ENCODE measurements at regions of chr11 and their contacts with region 1.

Region 1: GRCh38 chr11:117946842-117947526 is 17.8 kb upstream of the TMPRSS13 start:
- DNase-seq: peak; percentile 79
- CTCF ChIP-seq: peak; percentile 93

Region 2: GRCh38 chr11:117807482-117808327 is 139.3 kb before region 1 on chr11:
- CTCF ChIA-PET with region 1: interaction called, 144 read pairs
- POLR2A ChIA-PET with region 1: interaction called, 4 read pairs
- DNase-seq: peak; percentile 78
- CTCF ChIP-seq: peak; percentile 87

Region 3: GRCh38 chr11:117851106-117851505 is 95.9 kb before region 1 on chr11:
- CTCF ChIA-PET with region 1: interaction called, 169 read pairs
- POLR2A ChIA-PET with region 1: no interaction called
- DNase-seq: no peak
- CTCF ChIP-seq: no peak

Region 4: DNA sequence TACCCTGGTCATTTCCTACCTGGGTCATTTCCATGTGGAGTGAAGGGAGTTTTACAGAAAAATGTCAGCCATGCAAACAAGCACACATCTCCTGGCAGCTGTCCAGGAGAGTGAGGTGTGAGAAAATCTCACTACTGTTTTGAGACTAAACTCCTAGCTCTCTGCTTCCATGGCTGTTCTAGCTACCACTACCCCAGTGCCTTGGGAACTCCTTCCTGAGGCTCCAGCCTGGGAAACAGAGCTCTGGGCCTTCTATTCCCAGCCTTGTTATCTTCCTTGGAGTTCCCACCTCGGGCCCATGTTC is 15.0 kb before region 1 on chr11:
- CTCF ChIA-PET with region 1: interaction called, 135 read pairs
- POLR2A ChIA-PET with region 1: interaction called, 3 read pairs
- DNase-seq: peak; percentile 75
- CTCF ChIP-seq: no peak

Region 5: GRCh38 chr11:117985953-117986887 is 39.2 kb after region 1 on chr11 and contains the start of gene IL10RA:
- CTCF ChIA-PET with region 1: interaction called, 23 read pairs
- POLR2A ChIA-PET with region 1: no interaction called
- DNase-seq: peak; percentile 96
- CTCF ChIP-seq: no peak

Region 6: DNA sequence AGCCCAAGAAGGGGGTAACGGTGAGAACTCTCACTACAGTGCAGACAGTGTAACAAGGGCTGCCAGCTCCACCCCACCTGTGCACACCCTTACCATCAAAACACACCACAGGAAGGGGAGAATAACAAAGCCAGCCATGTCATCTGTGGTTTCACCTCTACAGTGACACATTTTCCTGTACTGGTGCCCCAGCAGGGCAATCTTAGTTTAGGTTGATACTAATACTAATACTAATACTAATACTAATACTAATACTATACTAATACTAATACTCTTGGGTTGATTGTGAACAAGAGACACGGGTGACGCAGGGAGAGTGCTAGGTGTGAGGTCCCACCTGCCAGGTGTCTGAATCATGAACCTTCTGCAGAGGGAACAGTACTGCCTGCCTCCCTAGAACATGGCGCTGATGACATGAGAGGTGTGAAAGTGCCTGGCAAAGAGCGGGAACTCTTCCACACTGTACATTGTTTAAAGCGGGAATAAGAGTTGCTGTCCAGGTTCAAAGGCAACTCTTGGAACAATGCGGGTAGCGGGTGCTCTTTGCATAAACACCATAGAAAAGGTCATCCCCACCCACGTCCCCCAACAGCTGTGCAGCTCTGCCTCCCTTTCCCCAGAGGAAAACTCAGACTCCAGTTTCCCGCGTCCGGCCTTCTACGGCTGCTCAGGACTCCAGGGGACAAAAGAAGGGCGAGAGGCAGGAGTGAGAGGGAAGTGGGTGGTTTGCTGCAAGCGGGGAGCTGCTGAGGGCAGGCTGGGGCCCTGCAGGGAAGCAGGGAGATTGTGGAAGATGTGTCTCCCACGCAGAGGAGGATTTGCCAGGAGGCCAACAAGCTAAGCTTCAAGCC is 104.9 kb after region 1 on chr11:
- CTCF ChIA-PET with region 1: interaction called, 102 read pairs
- POLR2A ChIA-PET with region 1: no interaction called
- DNase-seq: no peak
- CTCF ChIP-seq: no peak

Measured in GM10248 (cell line).